ENCODE measurements at regions of chr11 and their contacts with region 1.

Region 1: DNA sequence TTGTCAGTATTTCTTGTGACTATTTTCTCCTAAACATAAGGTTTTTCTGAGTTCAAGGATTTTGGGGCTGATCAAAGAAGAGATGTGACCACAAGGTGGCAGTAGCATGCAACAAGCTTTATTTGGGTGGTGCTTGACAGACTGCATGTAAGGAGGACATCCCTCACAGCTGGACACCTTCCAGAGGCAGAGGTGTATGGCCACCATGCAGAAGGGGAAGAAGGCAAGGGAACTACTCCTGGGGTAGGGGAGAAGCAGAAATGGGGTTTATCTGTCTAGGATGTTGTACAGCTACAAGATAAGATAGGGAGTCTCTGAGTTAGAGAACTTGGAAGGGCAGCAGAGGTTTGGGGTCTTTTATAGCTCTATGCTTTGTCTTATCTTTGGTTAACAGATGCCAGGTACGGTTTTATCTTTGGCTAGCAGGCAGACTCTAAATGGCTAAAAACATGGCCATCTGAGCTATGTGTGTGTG is 5.1 kb upstream of the BIRC2 start:
- DNase-seq: peak; percentile 82
- ATAC-seq: peak; percentile 73
- H3K4me3 Mint-ChIP-seq: no peak overlapping the region
- H3K27ac Mint-ChIP-seq: no peak overlapping the region
- H3K4me1 Mint-ChIP-seq: peaks cover 24% of the 10 kb centered on the region
- H3K27me3 Mint-ChIP-seq: no peaks in the 10 kb centered on the region

Region 2: DNA sequence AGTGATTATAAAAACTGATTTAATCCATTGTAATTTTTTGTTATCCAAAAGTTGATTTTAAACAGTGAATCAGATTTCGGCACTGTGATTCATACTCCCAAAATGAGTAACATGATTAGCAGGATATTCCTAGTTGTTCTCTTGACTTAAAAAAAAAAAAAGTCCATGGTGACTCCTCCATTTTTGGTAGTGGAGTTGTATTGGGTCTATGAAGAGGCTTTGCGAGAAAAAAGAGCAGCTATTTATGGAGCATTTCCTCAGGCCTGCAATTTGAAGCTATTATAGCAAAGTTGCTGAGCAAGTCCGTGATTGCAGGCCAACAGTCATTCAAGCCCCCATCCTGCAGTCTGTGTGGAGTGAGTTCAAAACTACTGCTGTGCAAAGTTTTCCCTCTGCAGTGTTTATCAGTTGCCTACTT is 202.8 kb before region 1 on chr11:
- CTCF ChIA-PET with region 1: no interaction called
- DNase-seq: no peak
- ATAC-seq: no peak
- H3K4me3 Mint-ChIP-seq: no peak overlapping the region
- H3K27ac Mint-ChIP-seq: no peak overlapping the region
- H3K4me1 Mint-ChIP-seq: no peaks in the 10 kb centered on the region
- H3K27me3 Mint-ChIP-seq: peaks cover 17% of the 10 kb centered on the region

Region 3: GRCh38 chr11:102287964-102288724 is 53.7 kb before region 1 on chr11:
- CTCF ChIA-PET with region 1: interaction called, 110 read pairs
- DNase-seq: peak; percentile 51
- ATAC-seq: peak; percentile 89
- H3K4me3 Mint-ChIP-seq: peak overlapping the region; percentile 34
- H3K27ac Mint-ChIP-seq: no peak overlapping the region
- H3K4me1 Mint-ChIP-seq: peaks cover 26% of the 10 kb centered on the region
- H3K27me3 Mint-ChIP-seq: no peaks in the 10 kb centered on the region

Region 4: DNA sequence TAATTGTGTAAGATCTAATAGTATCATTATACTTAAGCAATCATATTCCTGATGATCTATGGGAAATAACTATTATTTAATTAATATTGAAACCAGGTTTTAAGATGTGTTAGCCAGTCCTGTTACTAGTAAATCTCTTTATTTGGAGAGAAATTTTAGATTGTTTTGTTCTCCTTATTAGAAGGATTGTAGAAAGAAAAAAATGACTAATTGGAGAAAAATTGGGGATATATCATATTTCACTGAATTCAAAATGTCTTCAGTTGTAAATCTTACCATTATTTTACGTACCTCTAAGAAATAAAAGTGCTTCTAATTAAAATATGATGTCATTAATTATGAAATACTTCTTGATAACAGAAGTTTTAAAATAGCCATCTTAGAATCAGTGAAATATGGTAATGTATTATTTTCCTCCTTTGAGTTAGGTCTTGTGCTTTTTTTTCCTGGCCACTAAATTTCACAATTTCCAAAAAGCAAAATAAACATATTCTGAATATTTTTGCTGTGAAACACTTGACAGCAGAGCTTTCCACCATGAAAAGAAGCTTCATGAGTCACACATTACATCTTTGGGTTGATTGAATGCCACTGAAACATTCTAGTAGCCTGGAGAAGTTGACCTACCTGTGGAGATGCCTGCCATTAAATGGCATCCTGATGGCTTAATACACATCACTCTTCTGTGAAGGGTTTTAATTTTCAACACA is 18.2 kb before region 1 on chr11:
- CTCF ChIA-PET with region 1: interaction called, 10 read pairs
- DNase-seq: no peak
- ATAC-seq: no peak
- H3K4me3 Mint-ChIP-seq: no peak overlapping the region
- H3K27ac Mint-ChIP-seq: peak overlapping the region; percentile 59
- H3K4me1 Mint-ChIP-seq: peaks cover 58% of the 10 kb centered on the region
- H3K27me3 Mint-ChIP-seq: no peaks in the 10 kb centered on the region

Region 5: DNA sequence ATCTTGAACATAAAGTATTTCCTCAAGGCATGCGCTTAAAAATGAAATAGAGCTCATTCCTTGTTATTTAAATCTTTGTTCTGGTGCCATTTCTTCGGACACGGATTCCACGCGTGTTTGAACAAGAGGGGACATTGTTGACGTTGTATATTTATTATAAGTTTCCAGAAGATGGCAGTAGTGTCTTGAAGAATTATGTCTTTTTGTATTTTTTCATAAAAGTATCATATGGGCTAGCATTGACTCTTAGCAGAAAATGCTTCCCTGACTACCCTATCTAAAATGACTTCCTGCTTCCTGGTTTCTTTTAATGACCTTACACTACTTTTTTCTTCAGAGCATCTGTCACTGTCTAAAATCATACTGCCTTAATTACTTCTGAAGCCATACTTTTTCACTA is 25.5 kb after region 1 on chr11:
- CTCF ChIA-PET with region 1: interaction called, 20 read pairs
- DNase-seq: no peak
- ATAC-seq: peak; percentile 60
- H3K4me3 Mint-ChIP-seq: no peak overlapping the region
- H3K27ac Mint-ChIP-seq: peak overlapping the region; percentile 42
- H3K4me1 Mint-ChIP-seq: peaks cover 19% of the 10 kb centered on the region
- H3K27me3 Mint-ChIP-seq: no peaks in the 10 kb centered on the region

Region 6: DNA sequence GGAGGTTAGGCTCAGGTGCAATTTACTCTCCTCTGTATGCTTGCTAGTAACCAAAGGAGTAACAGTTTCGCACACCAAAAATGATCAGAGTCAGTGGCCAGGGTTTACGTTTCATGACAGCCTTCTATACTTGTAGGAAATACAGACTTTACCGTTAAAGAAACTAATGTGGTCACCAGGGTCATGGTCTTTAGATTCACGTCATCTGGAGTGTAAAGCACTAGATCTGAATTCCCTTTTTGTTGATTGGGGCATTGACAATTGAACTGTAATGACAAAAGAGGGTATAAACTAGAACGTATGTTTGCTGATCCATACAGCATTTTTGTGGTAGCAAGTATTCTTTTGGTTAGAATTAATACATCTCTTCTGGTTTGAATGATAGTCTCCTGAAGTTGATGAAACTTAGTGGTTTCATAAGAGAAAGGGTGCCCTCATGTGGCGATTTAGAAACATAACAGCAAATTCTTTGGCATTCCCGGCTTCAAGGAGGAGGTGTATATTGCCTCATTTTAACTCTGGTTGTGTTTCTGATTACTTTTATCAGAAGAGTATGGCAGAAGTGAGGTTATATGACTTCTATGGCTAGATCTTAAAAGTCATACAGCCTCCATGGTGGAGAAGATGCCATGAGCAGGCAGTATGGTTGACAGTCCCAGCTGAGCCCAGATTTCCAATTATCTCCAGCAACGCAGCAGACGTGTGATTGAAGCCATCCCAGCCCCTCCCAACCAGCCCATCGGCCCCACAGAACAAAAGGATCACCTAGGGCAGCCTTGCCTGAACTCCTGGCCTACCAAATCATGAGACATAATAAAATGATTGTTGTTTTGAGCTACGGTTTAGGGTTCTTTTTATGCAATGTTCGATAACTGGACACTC is 153.5 kb after region 1 on chr11:
- CTCF ChIA-PET with region 1: interaction called, 31 read pairs
- DNase-seq: peak; percentile 45
- ATAC-seq: peak; percentile 78
- H3K4me3 Mint-ChIP-seq: peak overlapping the region; percentile 15
- H3K27ac Mint-ChIP-seq: peak overlapping the region; percentile 39
- H3K4me1 Mint-ChIP-seq: peaks cover 16% of the 10 kb centered on the region
- H3K27me3 Mint-ChIP-seq: peaks cover 22% of the 10 kb centered on the region

Region 7: DNA sequence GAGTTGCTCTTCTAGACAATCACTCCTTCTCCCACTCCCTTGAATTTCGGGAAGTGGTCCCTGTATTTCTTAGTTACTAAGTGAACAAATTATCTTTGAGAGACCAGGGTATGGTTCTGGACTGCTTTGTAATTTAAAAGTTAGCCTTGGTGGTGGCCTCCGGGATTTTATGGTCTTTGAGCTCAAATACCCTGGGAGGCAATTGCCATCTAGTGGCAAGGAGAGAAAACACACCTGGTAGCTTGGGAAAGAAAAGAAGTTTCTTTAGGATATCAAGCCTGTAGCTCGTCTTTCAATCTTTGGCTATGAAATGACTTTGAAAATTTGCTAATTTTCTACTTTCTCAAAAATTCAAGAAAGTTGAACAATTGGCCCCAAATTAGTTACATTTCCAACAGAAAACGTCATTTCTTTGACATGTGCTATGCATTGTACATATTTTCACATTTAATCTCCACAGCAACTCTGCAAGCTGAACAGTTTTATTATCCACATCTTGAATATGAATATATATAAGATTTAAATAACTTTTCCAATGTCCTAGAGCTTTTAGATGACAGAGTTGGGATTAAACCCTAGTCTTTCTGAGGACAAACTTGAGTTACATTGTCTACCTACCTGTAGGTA is 324.6 kb after region 1 on chr11:
- CTCF ChIA-PET with region 1: interaction called, 30 read pairs
- DNase-seq: no peak
- ATAC-seq: peak; percentile 49
- H3K4me3 Mint-ChIP-seq: no peak overlapping the region
- H3K27ac Mint-ChIP-seq: no peak overlapping the region
- H3K4me1 Mint-ChIP-seq: no peaks in the 10 kb centered on the region
- H3K27me3 Mint-ChIP-seq: peaks cover 2% of the 10 kb centered on the region

Measured in activated CD8-positive, alpha-beta memory T cell treated with anti-CD3 and anti-CD28 coated beads, Interleukin-2, amount 10 ng/mL, durations not matched to agents 7 days and 5 days (primary cell).